ENCODE measurements at regions of chr4 and their contacts with region 1.

Region 1: DNA sequence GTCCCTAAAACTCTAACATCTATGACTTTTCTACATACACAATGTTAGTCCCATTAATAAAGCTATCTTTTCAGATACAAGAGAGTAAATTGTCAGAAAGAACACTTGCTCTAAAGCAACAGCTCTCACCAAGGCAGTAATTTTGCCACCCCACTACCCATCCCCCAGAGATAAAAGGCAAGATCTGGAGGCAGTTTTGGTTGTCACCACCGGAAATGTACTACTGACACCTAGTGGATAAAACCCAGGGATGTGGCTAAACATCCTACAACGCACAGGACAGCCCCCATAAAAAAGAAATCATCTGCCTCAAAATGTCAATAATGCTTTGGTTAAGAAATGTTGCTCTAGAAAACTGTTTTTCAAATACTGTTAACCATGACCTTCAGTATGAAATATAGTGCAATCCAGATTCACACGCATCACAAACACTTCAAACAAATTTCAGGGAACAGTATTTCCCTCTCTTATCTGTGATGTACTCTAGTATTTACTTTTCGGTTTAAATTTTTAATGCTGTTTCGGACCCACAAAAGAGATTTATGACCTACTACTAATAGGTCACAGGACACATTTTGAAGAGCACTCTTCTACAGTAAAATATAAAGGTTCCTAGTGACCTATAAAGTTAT is 5.1 kb downstream of the FBXL5 start:
- DNase-seq: peak; percentile 23 to 88 (median 38)
- ATAC-seq: peak; percentile 79
- H3K4me3 ChIP-seq: no peak overlapping the region
- H3K4me3 Mint-ChIP-seq: peak overlapping the region; percentile 15
- H3K27ac ChIP-seq: no peak overlapping the region
- H3K27ac Mint-ChIP-seq: peak overlapping the region; percentile 7
- H3K4me1 ChIP-seq: peaks cover 26% of the 10 kb centered on the region
- H3K4me1 Mint-ChIP-seq: peaks cover 83% of the 10 kb centered on the region
- H3K27me3 ChIP-seq: no peaks in the 10 kb centered on the region
- H3K27me3 Mint-ChIP-seq: no peaks in the 10 kb centered on the region
- CTCF ChIP-seq: peak; percentile 82

Region 2: DNA sequence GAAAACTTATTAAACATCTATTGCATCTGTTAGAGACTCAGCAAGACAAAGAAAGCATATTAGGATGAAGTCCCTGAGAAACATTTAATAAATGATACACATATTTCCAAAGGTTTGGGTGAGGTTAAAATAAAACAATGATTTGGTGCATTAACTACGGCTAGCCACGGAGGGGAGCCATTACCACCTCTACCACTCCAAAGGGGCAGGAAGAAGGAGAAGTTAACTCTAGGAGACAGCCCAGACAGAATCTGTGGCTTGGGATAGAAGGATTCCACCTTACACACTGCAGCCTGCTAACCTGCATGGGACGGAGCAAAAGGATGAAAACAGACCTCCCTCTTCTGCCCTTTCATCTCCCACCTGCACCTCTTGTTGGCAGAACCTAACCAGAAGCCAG is 411.3 kb before region 1 on chr4:
- CTCF ChIA-PET with region 1: no interaction called
- POLR2A ChIA-PET with region 1: interaction called, 3 read pairs
- intact Hi-C with region 1: loop called in 1 of 2 experiments (anchors 2 kb)
- DNase-seq: peak in 6 of 14 experiments; percentile 5 to 56 (median 38)
- ATAC-seq: peak; percentile 52
- H3K4me3 ChIP-seq: no peak overlapping the region
- H3K4me3 Mint-ChIP-seq: no peak overlapping the region
- H3K27ac ChIP-seq: no peak overlapping the region
- H3K27ac Mint-ChIP-seq: no peak overlapping the region
- H3K4me1 ChIP-seq: peaks cover 7% of the 10 kb centered on the region
- H3K4me1 Mint-ChIP-seq: peaks cover 13% of the 10 kb centered on the region
- H3K27me3 ChIP-seq: no peaks in the 10 kb centered on the region
- H3K27me3 Mint-ChIP-seq: no peaks in the 10 kb centered on the region
- CTCF ChIP-seq: peak; percentile 54

Region 3: DNA sequence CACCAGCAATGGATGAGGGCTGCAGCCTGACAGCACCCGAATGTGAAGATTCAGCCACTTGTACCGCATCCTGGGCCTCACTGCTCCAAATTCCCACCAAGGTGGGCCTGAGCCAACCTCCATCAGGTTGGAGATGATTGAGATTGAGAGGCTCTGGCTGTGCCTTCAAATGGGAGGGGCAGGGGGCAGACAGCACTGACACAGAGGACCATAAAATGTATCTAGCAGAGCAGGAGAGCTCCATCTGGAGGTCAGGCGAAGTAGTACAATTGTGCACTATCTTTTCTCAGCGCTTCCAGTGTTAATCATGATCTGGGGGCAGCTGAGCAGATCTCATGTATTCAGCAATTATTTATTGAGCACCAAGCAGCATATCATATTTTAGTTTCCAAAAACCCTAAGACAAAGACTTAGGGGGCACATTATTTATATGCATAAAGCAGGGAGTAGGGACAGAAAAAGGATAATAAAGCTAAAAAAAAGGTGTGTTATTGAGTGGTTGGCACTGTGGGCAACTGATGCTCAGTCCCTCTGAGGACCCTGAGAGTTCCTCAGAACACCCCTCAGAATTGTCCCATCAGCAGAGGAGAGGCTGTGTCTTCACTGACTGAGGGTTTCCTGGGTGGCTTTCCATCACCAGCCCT is 253.8 kb before region 1 on chr4:
- CTCF ChIA-PET with region 1: interaction called, 3 read pairs
- POLR2A ChIA-PET with region 1: interaction called, 3 read pairs
- intact Hi-C with region 1: loop called in 1 of 2 experiments (anchors 5 kb)
- DNase-seq: peak; percentile 5 to 71 (median 38)
- ATAC-seq: peak; percentile 80
- H3K4me3 ChIP-seq: no peak overlapping the region
- H3K4me3 Mint-ChIP-seq: no peak overlapping the region
- H3K27ac ChIP-seq: no peak overlapping the region
- H3K27ac Mint-ChIP-seq: no peak overlapping the region
- H3K4me1 ChIP-seq: peaks cover 24% of the 10 kb centered on the region
- H3K4me1 Mint-ChIP-seq: peaks cover 35% of the 10 kb centered on the region
- H3K27me3 ChIP-seq: no peaks in the 10 kb centered on the region
- H3K27me3 Mint-ChIP-seq: no peaks in the 10 kb centered on the region
- CTCF ChIP-seq: peak; percentile 78

Region 4: GRCh38 chr4:15457406-15458201 is 192.4 kb before region 1 on chr4:
- CTCF ChIA-PET with region 1: no interaction called
- POLR2A ChIA-PET with region 1: no interaction called
- intact Hi-C with region 1: loop called in 1 of 2 experiments (anchors 5 kb)
- DNase-seq: peak in 3 of 14 experiments; percentile 51 to 62 (median 54)
- ATAC-seq: peak; percentile 59
- H3K4me3 ChIP-seq: no peak overlapping the region
- H3K4me3 Mint-ChIP-seq: no peak overlapping the region
- H3K27ac ChIP-seq: no peak overlapping the region
- H3K27ac Mint-ChIP-seq: no peak overlapping the region
- H3K4me1 ChIP-seq: no peaks in the 10 kb centered on the region
- H3K4me1 Mint-ChIP-seq: peaks cover 11% of the 10 kb centered on the region
- H3K27me3 ChIP-seq: no peaks in the 10 kb centered on the region
- H3K27me3 Mint-ChIP-seq: no peaks in the 10 kb centered on the region
- CTCF ChIP-seq: peak; percentile 80

Region 5: GRCh38 chr4:15587649-15588048 is 62.4 kb before region 1 on chr4:
- CTCF ChIA-PET with region 1: no interaction called
- POLR2A ChIA-PET with region 1: no interaction called
- intact Hi-C with region 1: no loop called
- DNase-seq: no peak
- ATAC-seq: no peak
- H3K4me3 ChIP-seq: no peak overlapping the region
- H3K4me3 Mint-ChIP-seq: no peak overlapping the region
- H3K27ac ChIP-seq: no peak overlapping the region
- H3K27ac Mint-ChIP-seq: no peak overlapping the region
- H3K4me1 ChIP-seq: no peaks in the 10 kb centered on the region
- H3K4me1 Mint-ChIP-seq: no peaks in the 10 kb centered on the region
- H3K27me3 ChIP-seq: no peaks in the 10 kb centered on the region
- H3K27me3 Mint-ChIP-seq: no peaks in the 10 kb centered on the region
- CTCF ChIP-seq: no peak